Activated CD8-positive, alpha-beta T cell treated with anti-CD3 and anti-CD28 coated beads for 36 hours (primary cell): ENCODE measurements at regions of chr4 and their contacts with region 1.

Region 1: GRCh38 chr4:89254847-89255246 is 52.8 kb downstream of the GPRIN3 start:
- DNase-seq: peak; percentile 48
- ATAC-seq: peak; percentile 76
- H3K4me3 Mint-ChIP-seq: no peak overlapping the region
- H3K27ac Mint-ChIP-seq: peak overlapping the region; percentile 75
- H3K4me1 Mint-ChIP-seq: peaks cover 61% of the 10 kb centered on the region
- H3K27me3 Mint-ChIP-seq: no peaks in the 10 kb centered on the region
- CTCF ChIP-seq: peak; percentile 86

Region 2: DNA sequence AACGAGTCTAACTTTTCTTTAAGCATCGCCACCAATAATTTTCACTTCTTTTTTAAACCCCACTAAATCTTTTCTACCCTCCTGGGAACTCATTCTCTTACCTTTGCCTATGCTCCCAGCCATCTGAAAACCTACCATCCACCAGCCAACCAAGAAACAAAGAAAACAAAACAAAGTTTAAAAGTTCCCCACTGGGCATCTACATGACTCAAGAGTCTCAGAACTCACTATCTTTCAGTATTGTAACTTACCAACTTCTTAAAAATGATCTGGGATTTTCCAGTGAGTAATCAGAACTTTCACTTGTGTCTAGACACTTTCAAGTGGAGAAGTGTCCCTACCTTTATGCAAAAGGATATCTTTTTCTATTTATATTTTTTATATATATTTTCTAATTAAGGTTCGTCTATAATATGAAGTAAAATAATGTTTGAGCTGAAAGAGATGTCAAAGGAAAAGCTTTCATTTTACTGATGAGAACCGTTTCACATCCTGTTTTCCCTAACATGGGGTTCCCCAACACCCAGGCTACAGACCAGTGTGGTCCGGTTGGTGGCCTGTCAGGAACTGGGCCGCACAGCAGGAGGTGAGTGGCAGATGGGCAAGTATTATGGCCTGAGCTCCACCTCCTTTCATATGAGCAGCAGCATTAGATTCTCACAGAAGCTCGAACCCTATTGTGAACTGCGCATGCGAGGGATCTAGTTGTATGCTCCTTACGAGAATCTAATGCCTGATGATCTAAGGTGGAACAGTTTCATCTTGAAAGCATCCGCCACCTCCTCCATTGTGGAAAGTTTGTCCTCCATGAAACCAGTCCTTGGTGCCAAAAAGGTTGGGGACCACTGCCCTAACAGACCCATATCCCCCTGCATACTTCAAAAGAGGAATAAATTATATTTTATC is 153.3 kb before region 1 on chr4:
- CTCF ChIA-PET with region 1: no interaction called
- POLR2A ChIA-PET with region 1: no interaction called
- intact Hi-C with region 1: no loop called
- DNase-seq: no peak
- ATAC-seq: peak; percentile 78
- H3K4me3 Mint-ChIP-seq: no peak overlapping the region
- H3K27ac Mint-ChIP-seq: peak overlapping the region; percentile 62
- H3K4me1 Mint-ChIP-seq: peaks cover 24% of the 10 kb centered on the region
- H3K27me3 Mint-ChIP-seq: no peaks in the 10 kb centered on the region
- CTCF ChIP-seq: no peak

Region 3: GRCh38 chr4:89242864-89243732 is 11.7 kb before region 1 on chr4:
- CTCF ChIA-PET with region 1: interaction called, 12 read pairs
- POLR2A ChIA-PET with region 1: interaction called, 5 read pairs
- intact Hi-C with region 1: no loop called
- DNase-seq: no peak
- ATAC-seq: peak; percentile 88
- H3K4me3 Mint-ChIP-seq: peak overlapping the region; percentile 1
- H3K27ac Mint-ChIP-seq: peak overlapping the region; percentile 76
- H3K4me1 Mint-ChIP-seq: peaks cover 38% of the 10 kb centered on the region
- H3K27me3 Mint-ChIP-seq: no peaks in the 10 kb centered on the region
- CTCF ChIP-seq: no peak

Region 4: DNA sequence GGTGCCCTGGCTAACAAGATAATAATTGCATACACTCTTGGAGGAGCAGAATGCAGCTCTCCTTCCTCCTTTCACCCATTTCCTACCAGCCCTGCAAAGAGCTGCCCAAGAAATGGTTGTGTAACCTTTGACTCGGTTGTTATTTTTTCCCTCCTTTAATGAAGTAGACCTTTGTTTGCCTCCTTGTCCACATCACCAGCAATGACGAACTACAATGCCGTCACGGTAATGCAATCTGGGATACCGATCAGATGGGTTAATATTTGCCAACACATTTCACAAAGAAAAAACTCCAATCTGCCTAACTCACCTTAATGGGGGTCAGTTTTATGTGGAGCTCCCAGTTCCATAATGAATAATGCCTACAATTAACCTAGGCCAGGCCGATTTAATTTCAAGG is 20.7 kb after region 1 on chr4:
- CTCF ChIA-PET with region 1: interaction called, 28 read pairs
- POLR2A ChIA-PET with region 1: interaction called, 4 read pairs
- intact Hi-C with region 1: no loop called
- DNase-seq: no peak
- ATAC-seq: no peak
- H3K4me3 Mint-ChIP-seq: no peak overlapping the region
- H3K27ac Mint-ChIP-seq: no peak overlapping the region
- H3K4me1 Mint-ChIP-seq: peaks cover 48% of the 10 kb centered on the region
- H3K27me3 Mint-ChIP-seq: no peaks in the 10 kb centered on the region
- CTCF ChIP-seq: no peak